Activated B cell treated with CpG ODN at 0.5 μM for 24 hours (primary cell): ENCODE measurements at regions of chr12 and their contacts with region 1.

Region 1: DNA sequence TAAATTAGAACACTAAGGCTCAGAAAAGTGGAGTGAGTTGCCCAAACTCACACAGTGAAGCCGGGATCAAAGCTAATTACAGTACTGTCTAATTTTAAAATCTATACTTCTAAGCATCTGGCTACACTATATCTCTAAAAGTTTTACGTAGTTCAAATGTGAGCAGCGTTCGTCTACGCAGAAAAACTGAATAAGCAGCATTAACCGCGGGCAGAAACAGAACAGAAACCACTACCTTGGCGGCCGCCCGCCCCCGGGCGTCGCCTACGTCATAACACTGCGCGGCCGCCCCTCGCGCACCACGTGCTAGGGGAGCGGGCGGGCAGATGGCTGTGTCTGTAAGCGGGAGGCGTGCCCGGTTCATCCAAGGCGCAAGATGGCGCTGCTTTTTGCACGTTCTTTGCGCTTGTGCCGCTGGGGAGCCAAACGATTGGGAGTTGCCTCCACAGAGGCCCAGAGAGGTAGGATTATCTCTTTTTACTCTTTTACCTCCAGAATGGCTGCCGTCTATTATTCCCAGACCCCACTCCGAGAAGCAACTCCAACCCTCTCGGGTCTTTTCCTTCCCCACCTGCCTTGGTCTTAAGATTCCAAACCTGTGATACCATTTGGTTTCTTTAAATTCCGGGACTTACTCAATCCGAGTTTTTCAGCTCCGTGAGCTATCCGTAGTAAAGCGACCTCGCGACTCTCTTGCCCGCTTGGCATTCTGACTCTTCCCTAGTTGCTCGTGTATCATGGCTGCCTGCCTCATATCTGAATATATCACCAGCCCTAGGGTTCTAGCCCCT is at the start of gene SPRYD4:
- DNase-seq: peak; percentile 92
- ATAC-seq: peak; percentile 90
- H3K4me3 Mint-ChIP-seq: peak within 1 kb of the TSS; percentile 94
- H3K27ac Mint-ChIP-seq: peak within 1 kb of the TSS; percentile 94
- H3K4me1 Mint-ChIP-seq: peaks cover 36% of the 10 kb centered on the region
- H3K27me3 Mint-ChIP-seq: no peaks in the 10 kb centered on the region
- CTCF ChIP-seq: no peak
- total RNA-seq, gene SPRYD4: 5.8 and 7.5 TPM in 2 replicates

Region 2: GRCh38 chr12:55829967-55830600 is 638.3 kb before region 1 on chr12:
- CTCF ChIA-PET with region 1: no interaction called
- POLR2A ChIA-PET with region 1: no interaction called
- intact Hi-C with region 1: no loop called
- DNase-seq: peak; percentile 32
- ATAC-seq: peak; percentile 13
- H3K4me3 Mint-ChIP-seq: peak overlapping the region; percentile 97
- H3K27ac Mint-ChIP-seq: peak overlapping the region; percentile 91
- H3K4me1 Mint-ChIP-seq: peaks cover 51% of the 10 kb centered on the region
- H3K27me3 Mint-ChIP-seq: no peaks in the 10 kb centered on the region
- CTCF ChIP-seq: no peak

Region 3: GRCh38 chr12:56206457-56207166 is 261.8 kb before region 1 on chr12:
- CTCF ChIA-PET with region 1: interaction called, 9 read pairs
- POLR2A ChIA-PET with region 1: interaction called, 7 read pairs
- intact Hi-C with region 1: loop called (anchors 1 kb)
- DNase-seq: no peak
- ATAC-seq: peak; percentile 47
- H3K4me3 Mint-ChIP-seq: no peak overlapping the region
- H3K27ac Mint-ChIP-seq: peak overlapping the region; percentile 80
- H3K4me1 Mint-ChIP-seq: peaks cover 39% of the 10 kb centered on the region
- H3K27me3 Mint-ChIP-seq: no peaks in the 10 kb centered on the region
- CTCF ChIP-seq: no peak

Region 4: GRCh38 chr12:56266693-56267442 is 201.5 kb before region 1 on chr12 and contains the start of gene COQ10A:
- CTCF ChIA-PET with region 1: interaction called, 10 read pairs
- POLR2A ChIA-PET with region 1: interaction called, 8 read pairs
- intact Hi-C with region 1: loop called (anchors 1 kb)
- DNase-seq: peak; percentile 90
- ATAC-seq: peak; percentile 90
- H3K4me3 Mint-ChIP-seq: peak within 1 kb of the TSS; percentile 93
- H3K27ac Mint-ChIP-seq: peak within 1 kb of the TSS; percentile 93
- H3K4me1 Mint-ChIP-seq: peaks cover 18% of the 10 kb centered on the region
- H3K27me3 Mint-ChIP-seq: no peaks in the 10 kb centered on the region
- CTCF ChIP-seq: no peak
- total RNA-seq, gene COQ10A: 30.2 and 35.6 TPM in 2 replicates

Region 5: DNA sequence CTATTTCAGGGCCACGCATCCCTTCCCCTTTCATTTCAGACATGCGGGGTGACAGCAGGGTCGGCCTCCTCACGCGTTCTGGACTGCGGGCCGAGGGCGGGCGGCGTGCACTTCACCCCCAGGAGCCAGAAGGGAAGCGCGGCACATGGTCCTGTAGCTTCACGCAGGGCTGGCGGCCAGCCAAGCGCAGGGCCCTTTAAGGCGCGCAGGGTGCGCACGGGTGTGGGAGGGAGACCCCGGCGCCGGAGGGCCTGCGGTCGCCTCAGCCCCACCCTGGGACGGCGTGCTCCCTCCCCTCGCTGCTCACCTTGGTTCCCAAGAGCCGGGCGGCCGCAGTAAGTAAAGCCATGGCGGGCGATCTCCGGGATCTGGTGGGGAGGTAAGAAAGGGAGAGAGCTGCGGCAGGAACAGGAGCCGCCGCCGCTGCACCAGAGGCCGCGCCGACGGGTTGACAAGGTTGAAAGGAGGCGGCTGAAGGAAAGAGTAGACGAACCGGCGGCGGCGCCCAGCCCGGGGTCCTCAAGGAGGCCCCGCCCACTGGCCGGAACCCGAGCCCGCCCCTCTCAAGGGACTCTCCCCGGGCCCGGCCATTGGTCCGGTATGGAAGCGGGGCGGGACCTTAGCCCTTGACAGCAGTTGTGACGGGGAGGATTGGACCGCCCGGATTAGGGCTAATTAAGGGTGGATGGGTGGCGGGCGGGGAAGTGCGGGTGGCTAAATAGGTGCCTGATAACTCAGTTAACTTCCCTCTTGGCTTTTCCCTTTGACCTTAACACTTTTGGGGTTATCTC is 168.4 kb before region 1 on chr12 and contains the start of gene CS:
- CTCF ChIA-PET with region 1: interaction called, 8 read pairs
- POLR2A ChIA-PET with region 1: interaction called, 5 read pairs
- intact Hi-C with region 1: loop called (anchors 1 kb)
- DNase-seq: peak; percentile 97
- ATAC-seq: peak; percentile 96
- H3K4me3 Mint-ChIP-seq: peak within 1 kb of the TSS; percentile 96
- H3K27ac Mint-ChIP-seq: peak within 1 kb of the TSS; percentile 97
- H3K4me1 Mint-ChIP-seq: peaks cover 59% of the 10 kb centered on the region
- H3K27me3 Mint-ChIP-seq: no peaks in the 10 kb centered on the region
- CTCF ChIP-seq: no peak
- total RNA-seq, gene CS: 229 and 233 TPM in 2 replicates

Region 6: GRCh38 chr12:56333679-56334489 is 134.5 kb before region 1 on chr12 and contains the start of gene PAN2:
- CTCF ChIA-PET with region 1: interaction called, 5 read pairs
- POLR2A ChIA-PET with region 1: interaction called, 17 read pairs
- intact Hi-C with region 1: loop called (anchors 1 kb)
- DNase-seq: peak; percentile 85
- ATAC-seq: peak; percentile 91
- H3K4me3 Mint-ChIP-seq: peak within 1 kb of the TSS; percentile 96
- H3K27ac Mint-ChIP-seq: peak within 1 kb of the TSS; percentile 100
- H3K4me1 Mint-ChIP-seq: peaks cover 46% of the 10 kb centered on the region
- H3K27me3 Mint-ChIP-seq: no peaks in the 10 kb centered on the region
- CTCF ChIP-seq: no peak
- total RNA-seq, gene PAN2: 86.3 and 98.9 TPM in 2 replicates

Region 7: GRCh38 chr12:56448860-56449621 is 19.4 kb before region 1 on chr12 and contains the start of gene TIMELESS:
- CTCF ChIA-PET with region 1: interaction called, 27 read pairs
- POLR2A ChIA-PET with region 1: interaction called, 18 read pairs
- intact Hi-C with region 1: loop called (anchors 1 kb)
- DNase-seq: peak; percentile 85
- ATAC-seq: peak; percentile 96
- H3K4me3 Mint-ChIP-seq: peak within 1 kb of the TSS; percentile 94
- H3K27ac Mint-ChIP-seq: peak within 1 kb of the TSS; percentile 97
- H3K4me1 Mint-ChIP-seq: peaks cover 22% of the 10 kb centered on the region
- H3K27me3 Mint-ChIP-seq: no peaks in the 10 kb centered on the region
- CTCF ChIP-seq: no peak
- total RNA-seq, gene TIMELESS: 31.8 and 35.0 TPM in 2 replicates